Heart right ventricle (tissue), 16 donors: ENCODE measurements at regions of chr10 and their contacts with region 1.

Region 1: DNA sequence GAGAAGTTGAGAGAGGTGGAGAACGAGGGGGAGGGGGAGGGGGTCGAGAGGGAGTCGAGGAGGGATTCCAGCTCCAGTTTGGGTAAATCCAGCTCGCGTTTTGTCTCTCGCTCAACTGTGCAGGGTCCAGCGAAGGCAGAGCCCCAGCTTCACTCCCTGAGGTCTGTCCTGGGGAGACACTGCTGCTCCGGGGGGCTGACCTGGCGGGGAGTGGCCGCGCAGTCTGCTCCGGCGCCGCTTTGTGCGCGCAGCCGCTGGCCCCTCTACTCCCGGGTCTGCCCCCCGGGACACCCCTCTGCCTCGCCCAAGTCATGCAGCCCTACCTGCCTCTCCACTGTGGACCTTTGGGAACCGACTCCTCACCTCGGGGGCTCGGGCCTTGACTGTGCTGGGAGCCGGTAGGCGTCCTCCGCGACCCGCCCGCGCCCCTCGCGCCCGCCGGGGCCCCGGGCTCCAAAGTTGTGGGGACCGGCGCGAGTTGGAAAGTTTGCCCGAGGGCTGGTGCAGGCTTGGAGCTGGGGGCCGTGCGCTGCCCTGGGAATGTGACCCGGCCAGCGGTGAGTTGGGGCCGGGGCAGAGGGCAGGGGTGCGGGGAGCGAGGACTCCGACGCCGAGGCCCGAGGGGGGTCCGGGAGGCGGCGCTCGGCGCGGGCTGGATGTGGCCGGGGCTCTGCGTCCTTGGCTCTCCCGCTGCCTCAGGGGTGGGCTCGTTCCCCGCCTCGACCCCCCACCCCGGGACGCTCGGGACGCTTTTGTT is at the start of gene TET1:
- DNase-seq: peak; percentile 47 to 54
- ATAC-seq: peak; percentile 64 to 83 (median 72)
- H3K4me3 ChIP-seq: peak within 1 kb of the TSS; percentile 61 to 86 (median 74)
- H3K27ac ChIP-seq: peak within 1 kb of the TSS in 7 of 10 donors; percentile 6 to 56 (median 48)
- H3K4me1 ChIP-seq: peaks cover 0 to 34% (median 5%) of the 10 kb centered on the region in 9 donors
- H3K27me3 ChIP-seq: peaks cover 4 to 71% (median 14%) of the 10 kb centered on the region in 7 donors
- CTCF ChIP-seq: no peak
- total RNA-seq, gene TET1: 1.9 to 4.2 (median 3.1) TPM

Region 2: DNA sequence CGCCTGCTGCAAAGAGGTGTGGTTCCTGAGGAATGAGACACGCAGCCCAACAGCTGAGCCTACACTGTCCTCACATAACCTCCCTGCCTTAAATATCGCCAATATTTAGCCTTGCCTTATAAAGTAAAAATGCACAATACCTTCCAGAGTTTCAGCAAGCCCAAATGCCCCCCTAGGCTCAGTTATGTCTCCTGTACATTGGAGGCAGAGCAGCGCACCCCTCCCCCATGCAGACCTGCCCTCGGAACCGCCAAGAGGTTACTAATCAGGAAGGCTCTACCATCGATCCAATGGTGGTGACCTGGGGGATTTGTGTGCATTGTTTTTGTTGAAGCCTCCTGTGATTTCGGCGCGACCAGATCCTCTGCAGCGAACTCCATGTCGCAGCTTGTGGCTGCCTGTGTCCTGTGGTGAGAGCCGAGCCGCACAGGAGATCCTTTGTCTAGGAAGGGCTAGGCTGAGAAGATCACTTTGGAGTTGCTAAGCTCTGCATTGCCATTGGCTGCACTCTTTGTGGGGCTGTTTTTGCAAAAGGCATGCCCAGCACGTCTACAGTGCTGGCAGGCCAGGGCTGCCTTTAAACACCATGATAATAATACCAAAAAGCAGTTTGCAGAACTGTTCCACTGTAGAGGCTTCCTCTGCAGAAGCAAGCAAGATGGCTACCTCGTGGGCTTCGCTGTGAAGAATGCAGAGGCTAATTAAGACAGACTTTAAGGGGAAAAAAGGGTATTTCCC is 39.8 kb after region 1 on chr10:
- intact Hi-C with region 1: loop called in 4 of 10 experiments (anchors 2 to 5 kb)
- DNase-seq: peak; percentile 55 to 59
- ATAC-seq: peak; percentile 89 to 95 (median 94)
- H3K4me3 ChIP-seq: peak overlapping the region; percentile 11 to 68 (median 56)
- H3K27ac ChIP-seq: peak overlapping the region in 9 of 10 donors; percentile 26 to 86 (median 75)
- H3K4me1 ChIP-seq: peaks cover 4 to 42% (median 34%) of the 10 kb centered on the region in 9 donors
- H3K27me3 ChIP-seq: no peaks in the 10 kb centered on the region
- CTCF ChIP-seq: no peak

Region 3: GRCh38 chr10:68655620-68656126 is 95.3 kb after region 1 on chr10:
- intact Hi-C with region 1: loop called in 2 of 10 experiments (anchors 10 kb)
- DNase-seq: no peak
- ATAC-seq: no peak
- H3K4me3 ChIP-seq: no peak overlapping the region
- H3K27ac ChIP-seq: no peak overlapping the region
- H3K4me1 ChIP-seq: no peaks in the 10 kb centered on the region
- H3K27me3 ChIP-seq: no peaks in the 10 kb centered on the region
- CTCF ChIP-seq: no peak